ENCODE measurements at regions of chr5 and their contacts with region 1.

Region 1: DNA sequence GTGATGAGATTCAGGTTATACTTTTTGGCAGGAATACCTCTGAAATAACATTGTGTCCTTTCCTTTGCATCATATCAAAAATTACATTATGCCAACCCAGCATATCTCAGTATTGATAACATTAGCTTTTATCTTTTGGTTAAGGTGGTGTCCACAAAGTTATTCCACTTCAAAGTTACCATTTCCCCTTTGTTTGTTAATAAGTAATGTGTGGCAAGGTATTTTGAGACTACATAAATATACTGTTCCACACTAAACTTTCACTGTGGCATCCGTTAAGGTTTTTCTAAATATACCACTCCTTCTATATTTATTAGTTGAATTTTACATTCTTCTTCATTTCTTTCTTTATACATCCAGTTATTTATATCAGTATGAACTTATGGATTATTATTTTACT is 14.1 kb upstream of the ARHGEF37 start:
- DNase-seq: no peak
- ATAC-seq: no peak

Region 2: GRCh38 chr5:148831590-148832565 is 735.3 kb before region 1 on chr5:
- intact Hi-C with region 1: no loop called
- DNase-seq: no peak
- ATAC-seq: peak; percentile 16 to 21

Region 3: GRCh38 chr5:149381987-149382340 is 185.3 kb before region 1 on chr5:
- intact Hi-C with region 1: loop called in 1 of 2 experiments (anchors 5 kb)
- DNase-seq: peak; percentile 84
- ATAC-seq: peak; percentile 76 to 78

Measured in left cardiac atrium (tissue), 4 donors.